ENCODE measurements at regions of chr17 and their contacts with region 1.

Region 1: DNA sequence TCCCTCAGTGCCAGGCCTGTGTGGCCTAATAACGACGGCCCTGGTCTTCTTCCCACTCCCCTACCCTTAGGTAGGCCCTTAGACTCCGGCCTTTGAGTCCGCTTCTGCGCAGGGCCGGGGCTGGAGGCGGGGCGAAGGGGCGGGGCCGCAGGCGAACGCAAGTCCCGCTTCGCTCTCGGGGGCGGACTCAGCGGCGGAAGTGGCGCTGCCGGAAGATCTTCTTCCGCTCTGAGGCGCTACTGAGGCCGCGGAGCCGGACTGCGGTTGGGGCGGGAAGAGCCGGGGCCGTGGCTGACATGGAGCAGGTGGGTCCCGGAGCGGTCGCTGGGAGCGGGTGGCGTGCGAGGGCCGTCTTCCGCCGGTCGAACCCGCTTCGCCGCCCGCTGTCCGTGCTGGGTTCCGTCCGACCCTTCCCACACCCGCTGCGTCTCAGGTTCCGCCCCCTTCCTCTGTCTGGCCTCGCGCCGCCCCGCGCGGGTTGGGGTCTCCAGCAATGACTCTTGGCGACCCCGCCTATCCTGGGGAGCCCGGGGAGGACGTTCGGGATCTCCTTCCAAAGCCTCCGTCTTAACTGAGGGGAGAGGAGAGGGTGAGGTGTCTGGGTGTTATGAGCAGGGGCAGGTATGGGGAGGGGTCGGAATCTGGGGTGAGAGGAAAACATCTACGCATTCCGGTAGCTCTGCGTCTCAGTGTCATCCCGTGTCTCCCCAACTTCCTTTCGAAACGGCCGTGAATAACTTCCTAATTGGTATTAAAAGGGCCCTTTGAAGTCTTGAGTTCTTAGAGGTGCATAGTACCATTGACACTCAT is at the start of gene STARD3:
- DNase-seq: peak; percentile 84 to 95 (median 88)
- ATAC-seq: peak; percentile 82
- H3K4me3 ChIP-seq: peak within 1 kb of the TSS; percentile 94
- H3K4me3 Mint-ChIP-seq: peak within 1 kb of the TSS; percentile 97
- H3K27ac ChIP-seq: peak within 1 kb of the TSS; percentile 92 to 94
- H3K27ac Mint-ChIP-seq: peak within 1 kb of the TSS; percentile 91
- H3K4me1 ChIP-seq: peaks cover 76% of the 10 kb centered on the region
- H3K4me1 Mint-ChIP-seq: peaks cover 68% of the 10 kb centered on the region
- H3K27me3 ChIP-seq: peaks cover 0 to 2% of the 10 kb centered on the region in 2 experiments
- H3K27me3 Mint-ChIP-seq: no peaks in the 10 kb centered on the region
- CTCF ChIP-seq: peak; percentile 43
- total RNA-seq, gene STARD3: 96.5 to 99.9 TPM

Region 2: DNA sequence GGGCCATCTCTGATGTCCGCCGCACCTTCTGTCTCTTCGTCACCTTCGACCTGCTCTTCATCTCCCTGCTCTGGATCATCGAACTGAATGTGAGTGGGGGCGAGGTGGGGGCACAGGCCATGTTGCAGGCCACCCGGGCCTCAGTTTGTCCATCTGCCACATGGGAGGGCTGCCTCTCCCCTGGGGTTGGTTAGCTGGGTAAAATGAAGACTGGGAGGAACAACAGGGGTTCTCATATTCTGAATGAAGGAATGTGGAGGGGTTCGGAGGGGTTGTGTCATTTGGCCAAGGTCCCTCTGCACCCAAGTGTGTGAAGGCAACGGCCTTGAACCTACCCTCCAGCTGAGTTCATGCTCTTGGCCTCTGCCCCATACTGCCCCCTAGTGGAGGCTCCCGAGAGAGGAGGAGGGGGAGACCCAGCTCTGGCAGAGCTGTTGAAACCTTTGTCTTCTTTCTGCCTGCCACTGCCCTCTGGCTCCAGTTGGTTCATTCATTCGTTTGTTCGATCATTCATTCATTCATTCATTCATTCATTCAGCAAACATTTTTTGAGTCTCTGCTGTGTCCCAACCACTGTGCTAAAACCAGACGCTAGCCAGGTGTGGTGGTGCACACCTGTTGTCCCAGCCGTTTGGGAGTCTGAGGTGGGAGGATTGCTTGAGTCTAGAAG is 16.7 kb after region 1 on chr17:
- CTCF ChIA-PET with region 1: interaction called, 17 read pairs
- POLR2A ChIA-PET with region 1: interaction called, 8 read pairs
- intact Hi-C with region 1: no loop called
- DNase-seq: peak; percentile 70 to 87 (median 77)
- ATAC-seq: peak; percentile 84
- H3K4me3 ChIP-seq: no peak overlapping the region
- H3K4me3 Mint-ChIP-seq: no peak overlapping the region
- H3K27ac ChIP-seq: no peak overlapping the region
- H3K27ac Mint-ChIP-seq: peak overlapping the region; percentile 70
- H3K4me1 ChIP-seq: peaks cover 28% of the 10 kb centered on the region
- H3K4me1 Mint-ChIP-seq: peaks cover 61% of the 10 kb centered on the region
- H3K27me3 ChIP-seq: no peaks in the 10 kb centered on the region
- H3K27me3 Mint-ChIP-seq: no peaks in the 10 kb centered on the region
- CTCF ChIP-seq: peak; percentile 97

Region 3: GRCh38 chr17:39687811-39688518 is 50.8 kb after region 1 on chr17 and contains the start of gene PGAP3:
- CTCF ChIA-PET with region 1: no interaction called
- POLR2A ChIA-PET with region 1: interaction called, 3 read pairs
- intact Hi-C with region 1: loop called (anchors 2 to 5 kb)
- DNase-seq: peak; percentile 66 to 91 (median 74)
- ATAC-seq: peak; percentile 87
- H3K4me3 ChIP-seq: peak within 1 kb of the TSS; percentile 74
- H3K4me3 Mint-ChIP-seq: peak within 1 kb of the TSS; percentile 100
- H3K27ac ChIP-seq: peak within 1 kb of the TSS; percentile 83
- H3K27ac Mint-ChIP-seq: peak within 1 kb of the TSS; percentile 98
- H3K4me1 ChIP-seq: peaks cover 19% of the 10 kb centered on the region
- H3K4me1 Mint-ChIP-seq: peaks cover 31% of the 10 kb centered on the region
- H3K27me3 ChIP-seq: no peaks in the 10 kb centered on the region
- H3K27me3 Mint-ChIP-seq: no peaks in the 10 kb centered on the region
- CTCF ChIP-seq: no peak
- total RNA-seq, gene PGAP3: 26.1 to 30.7 TPM

Region 4: DNA sequence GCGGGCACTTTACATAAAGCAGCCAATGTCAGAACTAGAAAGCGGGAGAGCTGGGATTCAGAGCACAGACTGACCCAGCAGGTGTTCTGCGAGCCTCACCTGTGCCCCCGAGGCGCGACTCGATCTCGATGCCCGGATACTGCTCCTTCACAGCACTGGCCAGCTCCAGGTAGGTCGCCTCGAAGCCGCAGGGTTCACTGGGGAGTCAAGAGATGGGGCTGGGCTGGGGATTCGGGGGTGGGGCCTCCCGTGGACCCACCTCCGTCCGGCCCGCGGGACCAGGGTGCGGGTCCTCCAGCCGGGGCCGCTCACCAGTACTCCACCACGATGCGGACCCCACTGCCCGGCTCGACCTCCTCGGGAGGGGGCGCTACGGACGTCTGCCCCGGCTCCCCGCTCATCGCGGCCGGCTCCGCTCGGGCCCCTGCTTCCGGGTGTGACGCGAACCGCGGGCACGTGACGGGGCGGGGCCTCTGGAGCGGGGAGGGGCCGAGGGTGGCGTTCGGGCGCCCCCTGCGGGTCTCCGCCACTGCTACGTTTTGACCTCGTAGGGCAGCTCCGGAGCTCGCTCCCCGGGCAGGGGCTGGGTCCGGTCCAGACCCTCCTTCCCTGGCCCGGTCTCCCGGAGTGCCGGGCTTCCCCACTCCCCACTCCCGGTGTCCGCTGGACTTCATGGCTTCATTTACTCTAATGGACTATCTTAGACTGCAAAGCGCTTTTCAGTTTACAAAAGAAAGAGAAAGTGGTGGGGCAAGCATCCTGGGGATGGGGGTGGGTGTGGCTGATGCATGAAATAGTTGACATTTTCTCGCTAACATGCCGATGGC is 93.2 kb after region 1 on chr17 and contains the start of gene MIEN1:
- CTCF ChIA-PET with region 1: interaction called, 5 read pairs
- POLR2A ChIA-PET with region 1: interaction called, 4 read pairs
- intact Hi-C with region 1: loop called in 1 of 2 experiments (anchors 5 kb)
- DNase-seq: peak; percentile 86 to 98 (median 94)
- ATAC-seq: peak; percentile 91
- H3K4me3 ChIP-seq: peak within 1 kb of the TSS; percentile 79
- H3K4me3 Mint-ChIP-seq: peak within 1 kb of the TSS; percentile 91
- H3K27ac ChIP-seq: peak within 1 kb of the TSS; percentile 90 to 91
- H3K27ac Mint-ChIP-seq: peak within 1 kb of the TSS; percentile 88
- H3K4me1 ChIP-seq: peaks cover 23% of the 10 kb centered on the region
- H3K4me1 Mint-ChIP-seq: peaks cover 17% of the 10 kb centered on the region
- H3K27me3 ChIP-seq: no peaks in the 10 kb centered on the region
- H3K27me3 Mint-ChIP-seq: no peaks in the 10 kb centered on the region
- CTCF ChIP-seq: peak; percentile 91
- total RNA-seq, gene MIEN1: 31.5 to 32.3 TPM

Region 5: DNA sequence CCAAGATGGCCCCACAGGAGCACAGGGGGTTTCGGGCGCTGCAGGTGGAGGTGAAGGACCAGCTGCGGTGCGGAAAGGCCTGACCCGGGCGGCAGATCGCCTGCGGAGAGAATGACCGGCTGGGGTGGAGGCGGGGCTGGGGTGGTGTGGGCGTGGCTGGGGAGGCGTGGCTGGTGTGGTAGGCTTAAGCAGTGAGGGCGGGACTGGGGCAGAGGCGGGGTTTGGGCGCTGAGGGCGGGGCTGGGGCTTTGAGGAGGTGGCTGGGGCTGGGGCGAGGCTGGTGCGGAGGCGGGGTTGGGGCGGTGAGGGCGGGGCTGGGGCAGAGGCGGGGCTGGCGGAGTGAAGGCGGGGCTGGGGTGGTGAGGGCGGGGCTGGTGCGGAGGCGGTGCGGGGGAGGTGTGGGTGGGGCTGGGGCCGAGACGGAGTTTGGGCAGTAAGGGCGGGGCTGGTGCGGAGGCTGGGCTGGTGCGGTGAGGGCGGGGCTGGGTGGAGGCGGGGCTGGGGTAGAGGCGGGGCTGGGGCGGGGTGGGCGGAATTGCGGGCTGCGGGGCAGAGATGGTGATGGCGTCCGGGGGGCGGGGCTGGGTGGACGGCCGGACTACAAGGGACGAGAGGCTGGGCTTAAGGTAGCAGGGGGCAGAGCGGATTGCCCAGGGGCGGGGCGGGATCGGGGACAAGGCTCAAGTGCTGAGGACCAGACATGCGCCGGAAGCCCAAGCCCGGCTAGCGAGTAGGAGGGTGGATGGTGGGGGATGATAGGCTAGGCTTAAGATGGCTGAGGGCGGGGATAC is 315.7 kb after region 1 on chr17:
- CTCF ChIA-PET with region 1: no interaction called
- POLR2A ChIA-PET with region 1: no interaction called
- intact Hi-C with region 1: loop called in 1 of 2 experiments (anchors 10 kb)
- DNase-seq: peak; percentile 90 to 99 (median 98)
- ATAC-seq: peak; percentile 86
- H3K4me3 ChIP-seq: peak overlapping the region; percentile 66
- H3K4me3 Mint-ChIP-seq: peak overlapping the region; percentile 90
- H3K27ac ChIP-seq: peak overlapping the region; percentile 22 to 41
- H3K27ac Mint-ChIP-seq: peak overlapping the region; percentile 77
- H3K4me1 ChIP-seq: peaks cover 20% of the 10 kb centered on the region
- H3K4me1 Mint-ChIP-seq: peaks cover 25% of the 10 kb centered on the region
- H3K27me3 ChIP-seq: no peaks in the 10 kb centered on the region
- H3K27me3 Mint-ChIP-seq: no peaks in the 10 kb centered on the region
- CTCF ChIP-seq: no peak

Measured in CD4-positive, alpha-beta T cell (primary cell).